K562 (cell line): ENCODE measurements at regions of chr16 and their contacts with region 1.

Region 1: DNA sequence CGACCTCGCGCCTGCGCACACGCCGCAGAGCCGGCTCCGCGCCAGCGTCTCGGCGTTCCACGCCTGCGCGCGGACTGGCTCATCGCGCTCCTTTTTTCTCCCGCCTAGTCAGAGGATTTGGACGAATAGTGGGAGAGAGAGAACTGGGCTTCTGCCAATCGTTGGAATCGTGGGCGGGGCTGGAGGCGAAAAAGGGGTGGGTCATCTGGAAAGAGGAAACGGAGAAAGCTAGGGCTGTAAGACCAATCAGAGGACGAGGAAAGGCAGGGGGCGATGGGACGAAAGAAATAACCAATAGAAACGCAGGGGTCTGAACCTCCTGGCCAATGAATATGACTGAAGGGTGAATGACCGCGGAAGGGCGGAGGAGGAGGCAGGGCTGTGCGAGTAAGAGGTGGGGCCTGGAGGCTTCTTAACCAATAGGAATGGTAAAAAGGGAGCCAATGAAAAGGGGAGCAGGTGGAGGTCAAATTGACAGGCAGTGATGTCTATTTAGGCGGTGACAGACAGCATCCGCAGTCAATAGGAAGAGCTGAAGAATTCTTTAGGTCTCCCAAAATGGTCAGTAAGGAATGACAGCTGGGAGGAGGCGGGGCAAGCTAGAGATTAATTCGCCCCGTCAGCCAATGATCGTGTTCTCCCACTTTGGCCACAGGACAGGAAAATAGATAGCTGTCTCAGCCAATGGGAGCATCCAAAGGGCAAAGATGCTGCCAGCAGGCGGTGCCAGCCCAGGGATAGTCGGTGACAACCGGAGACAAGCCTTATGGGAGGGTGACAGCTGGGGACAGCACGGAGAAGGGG is at the start of gene TBC1D10B:
- DNase-seq: peak; percentile 92 to 99 (median 96)
- ATAC-seq: peak; percentile 93
- H3K4me3 ChIP-seq: peak within 1 kb of the TSS; percentile 74
- H3K27ac ChIP-seq: peak within 1 kb of the TSS; percentile 74
- H3K4me1 ChIP-seq: peaks cover 25 to 44% of the 10 kb centered on the region in 2 experiments; a peak in 4 of 5 replicates
- H3K27me3 ChIP-seq: no peaks in the 10 kb centered on the region
- CTCF ChIP-seq: peak; percentile 29 to 47 (median 44); a peak in 4 of 6 replicates
- EP300 ChIP-seq: no peak
- POLR2A ChIP-seq: no peak
- RAD21 ChIP-seq: no peak
- polyA plus RNA-seq, gene TBC1D10B: 2.2 to 2.3 TPM

Region 2: DNA sequence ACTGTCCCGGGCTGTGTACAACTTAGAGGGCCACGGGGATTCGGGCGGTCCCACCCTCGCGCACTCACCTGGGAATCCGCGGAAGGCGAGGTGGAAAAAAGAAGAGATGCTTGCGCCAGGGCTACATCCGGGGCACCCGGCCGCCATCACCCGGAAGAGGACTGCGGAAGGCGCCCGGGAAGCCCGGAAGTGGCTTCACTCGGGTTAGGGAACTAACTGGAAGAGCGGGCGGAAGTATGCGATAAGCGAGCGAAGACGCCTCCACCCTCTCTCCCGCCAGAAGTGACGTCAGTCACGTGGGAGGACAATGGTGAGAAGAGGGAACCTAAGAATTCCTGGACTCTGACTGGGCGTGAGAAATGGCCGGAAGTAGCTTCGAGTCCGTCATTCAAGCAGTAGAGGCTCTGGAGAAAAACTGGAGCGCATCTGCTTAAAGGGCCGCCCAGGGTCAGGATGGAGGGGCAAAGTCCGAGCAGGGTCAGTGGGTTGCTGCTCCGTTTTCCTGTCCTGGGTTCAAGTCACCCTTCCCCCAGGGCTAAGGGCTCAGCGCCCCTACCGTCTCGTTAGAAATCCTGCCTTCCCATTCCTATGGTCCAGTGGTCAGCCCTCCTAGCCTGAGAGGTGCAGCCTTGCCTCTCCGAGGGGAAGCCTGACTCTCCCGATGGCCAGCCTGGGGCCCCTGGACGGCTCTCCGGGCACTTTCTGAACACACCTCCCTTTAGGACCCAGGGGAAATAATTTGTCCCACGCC is 15.3 kb before region 1 on chr16 and contains the start of gene CD2BP2:
- CTCF ChIA-PET with region 1: no interaction called
- POLR2A ChIA-PET with region 1: interaction called, 77 read pairs
- in situ Hi-C with region 1: no loop called
- intact Hi-C with region 1: loop called (anchors 2 kb)
- DNase-seq: peak; percentile 93 to 99 (median 94)
- ATAC-seq: peak; percentile 90
- H3K4me3 ChIP-seq: peak within 1 kb of the TSS; percentile 94
- H3K27ac ChIP-seq: peak within 1 kb of the TSS; percentile 99
- H3K4me1 ChIP-seq: peaks cover 13 to 53% of the 10 kb centered on the region in 2 experiments; a peak in 4 of 5 replicates
- H3K27me3 ChIP-seq: no peaks in the 10 kb centered on the region
- CTCF ChIP-seq: peak in 1 of 3 experiments; percentile 1; a peak in 1 of 6 replicates
- EP300 ChIP-seq: peak; percentile 34; the same call in 1 of the 2 replicates
- POLR2A ChIP-seq: peak; percentile 82
- RAD21 ChIP-seq: peak in 1 of 2 experiments; percentile 20; a peak in 1 of 4 replicates
- polyA plus RNA-seq, gene CD2BP2: 3.9 to 5.0 TPM

Region 3: DNA sequence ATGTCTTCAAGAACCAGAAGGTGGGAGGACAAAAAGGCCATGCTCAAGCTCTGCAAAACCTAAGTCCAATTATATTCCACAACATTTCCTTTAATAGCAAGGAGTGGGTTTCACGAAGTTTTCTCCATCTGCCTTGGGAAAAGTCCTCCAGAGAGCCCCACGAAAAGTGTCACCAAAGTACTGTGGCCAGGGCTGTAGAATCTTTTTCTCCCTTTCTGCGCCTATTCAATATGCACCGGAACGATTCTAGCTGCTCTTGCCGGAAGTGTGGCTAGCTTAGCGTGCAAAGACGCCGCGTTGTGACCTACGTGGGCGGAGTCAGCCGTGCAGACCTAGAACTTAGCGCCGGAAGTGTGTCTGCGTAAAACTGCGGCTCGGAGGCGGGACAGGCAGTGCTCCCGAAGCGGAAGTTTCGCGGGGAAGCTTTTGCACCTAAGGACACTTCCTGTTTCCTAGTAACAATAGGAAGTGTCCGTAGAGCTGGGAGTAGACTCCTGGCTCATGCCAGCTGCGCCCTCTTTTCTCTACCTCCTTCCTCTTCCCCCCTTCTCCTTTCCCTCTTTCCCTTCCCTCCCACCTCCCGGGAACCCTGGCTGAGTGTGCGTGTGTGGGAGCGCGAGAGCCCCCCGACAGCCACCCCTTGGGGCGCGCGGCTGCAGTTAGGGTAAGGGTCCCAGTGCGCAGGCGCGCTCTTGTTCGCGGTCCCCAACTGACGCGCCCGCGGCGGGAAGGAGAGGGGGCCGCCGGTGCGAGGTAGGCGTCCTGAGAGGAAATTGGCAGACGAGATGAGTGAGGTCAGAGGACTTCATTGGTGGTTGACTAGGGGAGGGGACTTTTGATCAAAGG is 703.5 kb after region 1 on chr16 and contains the starts of genes ZNF646 and ZNF668:
- CTCF ChIA-PET with region 1: no interaction called
- POLR2A ChIA-PET with region 1: no interaction called
- in situ Hi-C with region 1: no loop called
- intact Hi-C with region 1: no loop called
- DNase-seq: peak; percentile 92 to 99 (median 94)
- ATAC-seq: peak; percentile 91
- H3K4me3 ChIP-seq: peak within 1 kb of the TSS; percentile 79
- H3K27ac ChIP-seq: peak within 1 kb of the TSS; percentile 88
- H3K4me1 ChIP-seq: peaks cover 11 to 34% of the 10 kb centered on the region in 2 experiments; a peak in 4 of 5 replicates
- H3K27me3 ChIP-seq: no peaks in the 10 kb centered on the region
- CTCF ChIP-seq: no peak
- EP300 ChIP-seq: peak; percentile 45
- POLR2A ChIP-seq: peak; percentile 97
- RAD21 ChIP-seq: no peak
- polyA plus RNA-seq, gene ZNF646: 0.08 to 0.10 TPM
- polyA plus RNA-seq, gene ZNF668: 0.04 TPM in 1 of 2 experiments, not detected in the other